ENCODE measurements at regions of chr20 and their contacts with region 1.

Region 1: DNA sequence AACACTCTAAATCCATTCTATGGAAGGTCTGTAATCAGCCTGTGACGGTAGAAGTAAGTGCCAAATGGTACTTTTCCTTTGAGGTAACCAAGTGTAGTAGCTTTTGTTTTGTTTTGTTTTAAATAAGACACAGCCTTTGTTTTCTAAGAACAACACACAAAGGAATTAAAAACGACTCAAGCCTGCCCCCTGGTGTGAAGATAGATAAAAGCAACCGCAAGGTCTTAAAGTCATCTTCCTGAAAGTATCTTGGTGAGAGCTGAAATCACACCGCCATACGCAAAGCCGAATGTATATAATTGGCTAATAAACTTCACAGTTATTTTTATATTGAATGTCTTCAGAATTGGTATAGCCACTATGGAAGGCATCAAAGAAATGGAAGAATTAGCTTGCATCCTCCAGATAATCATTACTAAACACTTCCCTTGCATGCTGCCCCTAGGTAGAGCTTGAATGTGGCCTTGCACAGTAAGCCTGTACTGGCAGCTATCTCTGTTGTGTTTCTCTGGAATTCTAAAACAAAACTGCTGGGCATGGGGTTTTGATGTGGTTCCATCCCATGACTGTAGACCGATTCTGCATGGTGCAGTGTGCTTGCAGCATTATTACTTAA is 95.6 kb downstream of the LAMP5 start:
- H3K4me3 ChIP-seq: no peak overlapping the region
- H3K27ac ChIP-seq: no peak overlapping the region
- H3K4me1 ChIP-seq: no peaks in the 10 kb centered on the region
- CTCF ChIP-seq: no peak; the same call in 1 of the 2 replicates

Region 2: DNA sequence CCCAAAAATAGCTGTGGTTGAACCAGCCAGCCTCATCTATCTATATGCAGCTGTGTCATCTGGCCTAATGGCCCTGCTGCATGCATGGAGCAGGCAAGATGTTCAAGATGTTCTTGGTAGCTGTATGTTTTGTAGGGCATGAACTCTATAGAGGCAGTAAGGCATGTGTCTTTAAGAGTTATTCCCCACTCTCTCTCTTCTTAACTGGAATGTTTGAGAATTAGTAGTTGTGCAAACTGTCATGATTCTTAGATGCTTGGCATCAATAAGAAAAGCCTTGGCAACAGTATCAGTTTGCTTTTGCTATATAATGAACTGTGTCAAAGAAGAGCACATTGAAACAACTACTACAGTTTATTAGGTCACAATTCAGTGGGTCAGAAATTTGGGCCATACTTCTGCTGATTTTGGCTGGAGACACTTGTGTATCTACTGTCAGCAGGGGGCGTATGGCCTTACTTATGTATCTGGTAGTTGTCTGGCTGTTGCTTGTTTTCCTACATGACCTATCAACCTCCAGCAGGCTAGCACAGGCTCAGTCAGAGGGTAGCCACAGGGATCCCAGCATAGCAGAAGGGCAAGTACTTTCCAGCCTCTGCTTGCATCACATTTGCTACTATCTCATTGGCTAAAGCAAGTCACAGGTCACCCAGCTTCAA is 151.7 kb before region 1 on chr20:
- CTCF ChIA-PET with region 1: interaction called, 14 read pairs
- POLR2A ChIA-PET with region 1: no interaction called
- H3K4me3 ChIP-seq: no peak overlapping the region
- H3K27ac ChIP-seq: no peak overlapping the region
- H3K4me1 ChIP-seq: no peaks in the 10 kb centered on the region
- CTCF ChIP-seq: no peak

Region 3: GRCh38 chr20:9467995-9468394 is 142.0 kb before region 1 on chr20:
- CTCF ChIA-PET with region 1: interaction called, 14 read pairs
- POLR2A ChIA-PET with region 1: no interaction called
- H3K4me3 ChIP-seq: no peak overlapping the region
- H3K27ac ChIP-seq: no peak overlapping the region
- H3K4me1 ChIP-seq: no peaks in the 10 kb centered on the region
- CTCF ChIP-seq: no peak

Region 4: GRCh38 chr20:9557411-9557810 is 52.6 kb before region 1 on chr20:
- CTCF ChIA-PET with region 1: no interaction called
- POLR2A ChIA-PET with region 1: no interaction called
- H3K4me3 ChIP-seq: no peak overlapping the region
- H3K27ac ChIP-seq: no peak overlapping the region
- H3K4me1 ChIP-seq: no peaks in the 10 kb centered on the region
- CTCF ChIP-seq: no peak

Measured in HEK293 (cell line).